ENCODE measurements at regions of chr13 and their contacts with region 1.

Region 1: DNA sequence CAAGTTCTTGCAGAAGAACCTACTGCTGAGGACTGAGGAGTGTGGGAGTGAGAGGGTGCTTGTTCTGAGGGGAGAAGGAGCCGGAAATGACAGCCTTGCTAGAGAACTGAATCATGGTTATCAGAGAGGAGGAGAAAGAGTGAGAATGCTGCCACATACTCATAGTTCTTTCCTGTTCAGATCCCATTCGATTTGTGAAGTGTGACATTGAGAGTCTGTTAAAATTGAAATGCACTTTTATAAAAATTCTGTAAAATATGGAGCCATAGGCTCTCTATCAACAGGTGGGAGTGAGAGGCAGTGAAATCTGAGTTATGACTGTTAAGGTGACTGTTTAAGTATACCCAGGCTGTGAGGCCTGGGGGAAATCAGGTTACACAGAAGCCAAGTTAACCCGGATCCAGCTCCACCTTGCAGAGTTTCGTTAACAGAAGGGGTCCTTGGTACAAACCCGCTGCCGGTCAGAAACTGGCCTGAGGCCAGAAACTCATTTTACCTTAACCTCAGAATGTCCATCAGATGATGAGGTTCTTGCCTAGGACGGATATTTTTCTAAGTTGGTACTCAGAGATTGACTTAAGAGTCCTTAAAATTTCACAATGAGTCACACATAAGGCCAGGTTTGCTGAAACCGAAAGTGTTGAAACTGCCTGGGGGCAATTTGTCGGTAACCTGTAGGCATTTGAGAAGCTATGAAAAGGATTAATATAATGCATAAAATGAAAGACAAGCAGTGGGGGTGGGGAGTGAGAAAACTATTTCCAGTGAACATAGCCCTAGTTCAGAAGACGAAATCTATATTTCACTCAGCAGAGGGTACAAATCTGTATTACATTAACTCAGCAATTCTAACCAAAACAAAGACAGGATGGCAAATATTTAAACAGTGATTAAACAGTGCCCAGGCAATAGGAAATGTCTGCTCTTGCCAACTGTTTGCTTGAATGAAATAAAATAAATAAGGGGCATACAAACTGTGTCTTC is 350.5 kb downstream of the KCNRG start:
- DNase-seq: peak; percentile 76
- H3K4me3 Mint-ChIP-seq: peak overlapping the region; percentile 54
- H3K27ac Mint-ChIP-seq: peak overlapping the region; percentile 59
- H3K4me1 Mint-ChIP-seq: peaks cover 53% of the 10 kb centered on the region
- H3K27me3 Mint-ChIP-seq: peaks cover 15% of the 10 kb centered on the region

Region 2: DNA sequence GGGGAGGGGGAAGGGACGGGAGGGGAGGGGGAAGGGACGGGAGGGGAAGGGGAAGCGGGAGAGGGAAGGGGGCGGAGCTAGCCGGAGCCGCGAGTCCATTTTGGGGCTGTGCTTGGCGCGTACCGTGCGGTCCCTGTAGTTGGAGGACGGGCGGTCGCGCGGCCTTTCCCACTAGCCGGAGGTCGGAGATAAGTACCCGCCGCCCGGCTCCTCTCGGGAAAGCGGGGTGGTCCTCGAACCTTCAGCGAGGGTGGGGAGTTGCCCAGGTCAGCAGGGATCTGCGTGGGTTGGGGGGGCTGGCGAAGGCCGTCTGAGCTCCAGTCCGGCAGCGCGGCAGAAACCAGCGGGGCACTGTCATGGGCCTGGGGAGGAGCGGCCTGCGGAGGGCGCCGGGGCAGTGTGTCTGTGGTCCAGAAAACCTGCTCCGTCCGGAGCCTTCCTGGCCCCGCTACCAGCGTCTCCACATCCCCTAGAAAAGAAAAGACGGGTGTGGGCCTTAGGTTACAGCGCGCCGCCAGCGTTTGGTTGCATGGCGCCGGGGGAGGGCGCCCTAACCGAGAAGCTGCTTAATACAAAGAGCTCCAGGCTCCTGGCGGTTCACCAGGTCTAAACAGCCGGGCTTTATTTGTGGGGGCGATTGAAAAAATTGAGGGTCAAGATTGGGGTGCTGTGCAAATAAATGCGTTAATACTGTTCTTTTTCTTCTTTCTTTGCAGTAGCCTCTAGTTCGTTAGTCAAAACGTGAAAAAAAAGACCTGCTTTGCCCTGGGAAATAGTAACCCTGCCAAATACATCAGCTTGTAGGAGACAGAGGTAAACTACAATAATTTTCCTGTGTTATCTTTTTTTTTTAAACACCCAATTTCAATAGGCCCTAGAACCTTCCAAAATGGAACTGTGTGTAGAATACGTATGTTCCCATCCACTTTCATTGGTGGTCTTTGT is 368.5 kb before region 1 on chr13 and contains the start of gene TRIM13:
- CTCF ChIA-PET with region 1: interaction called, 3 read pairs
- POLR2A ChIA-PET with region 1: no interaction called
- intact Hi-C with region 1: loop called (anchors 1 kb)
- DNase-seq: peak; percentile 88
- H3K4me3 Mint-ChIP-seq: peak within 1 kb of the TSS; percentile 81
- H3K27ac Mint-ChIP-seq: peak within 1 kb of the TSS; percentile 86
- H3K4me1 Mint-ChIP-seq: peaks cover 44% of the 10 kb centered on the region
- H3K27me3 Mint-ChIP-seq: no peaks in the 10 kb centered on the region
- total RNA-seq, gene TRIM13: 9.8 to 11.6 TPM

Region 3: DNA sequence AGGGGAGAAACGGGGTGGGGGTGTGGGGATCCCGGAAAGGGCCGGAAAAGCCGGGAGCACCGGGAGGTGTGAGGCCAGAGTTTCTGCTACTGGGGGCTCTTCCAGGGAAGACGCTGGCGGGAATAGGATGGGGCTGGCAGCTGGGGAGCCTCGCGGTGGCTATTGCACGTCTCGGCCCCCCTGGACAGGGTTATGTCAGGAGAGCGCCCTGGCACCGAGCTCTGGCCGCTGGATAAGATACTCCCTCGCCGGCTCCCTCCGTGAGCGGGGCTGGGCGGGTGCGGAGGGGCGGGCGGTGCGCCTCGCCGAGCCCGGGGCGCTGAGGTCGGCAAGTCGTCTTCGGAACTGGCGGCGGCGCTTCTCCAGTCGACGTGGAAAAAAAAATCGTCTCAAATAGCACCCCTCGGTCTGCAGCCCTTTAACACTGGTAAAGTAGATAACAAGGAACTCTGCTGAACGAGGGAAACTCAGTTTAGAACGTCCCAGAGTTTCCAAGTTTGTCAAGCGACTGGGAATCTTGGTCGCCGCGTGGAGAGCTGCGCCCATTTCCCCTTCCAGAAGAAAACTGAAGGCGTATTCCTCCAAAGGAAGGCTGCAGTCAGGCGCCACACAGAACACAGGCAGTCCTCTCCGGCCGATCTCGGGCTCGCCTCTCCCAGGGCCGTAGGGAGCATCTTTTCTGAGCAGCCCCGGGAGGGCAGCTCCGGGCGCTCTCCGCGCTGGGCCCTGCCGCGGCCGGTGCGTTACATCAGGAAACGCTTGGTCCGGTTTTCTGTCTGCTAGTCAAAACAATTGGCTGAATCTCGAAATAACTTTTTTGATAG is 235.4 kb before region 1 on chr13:
- CTCF ChIA-PET with region 1: no interaction called
- POLR2A ChIA-PET with region 1: interaction called, 13 read pairs
- intact Hi-C with region 1: loop called (anchors 1 kb)
- DNase-seq: peak; percentile 42
- H3K4me3 Mint-ChIP-seq: peak overlapping the region; percentile 66
- H3K27ac Mint-ChIP-seq: peak overlapping the region; percentile 8
- H3K4me1 Mint-ChIP-seq: peaks cover 63% of the 10 kb centered on the region
- H3K27me3 Mint-ChIP-seq: peaks cover 64% of the 10 kb centered on the region

Region 4: DNA sequence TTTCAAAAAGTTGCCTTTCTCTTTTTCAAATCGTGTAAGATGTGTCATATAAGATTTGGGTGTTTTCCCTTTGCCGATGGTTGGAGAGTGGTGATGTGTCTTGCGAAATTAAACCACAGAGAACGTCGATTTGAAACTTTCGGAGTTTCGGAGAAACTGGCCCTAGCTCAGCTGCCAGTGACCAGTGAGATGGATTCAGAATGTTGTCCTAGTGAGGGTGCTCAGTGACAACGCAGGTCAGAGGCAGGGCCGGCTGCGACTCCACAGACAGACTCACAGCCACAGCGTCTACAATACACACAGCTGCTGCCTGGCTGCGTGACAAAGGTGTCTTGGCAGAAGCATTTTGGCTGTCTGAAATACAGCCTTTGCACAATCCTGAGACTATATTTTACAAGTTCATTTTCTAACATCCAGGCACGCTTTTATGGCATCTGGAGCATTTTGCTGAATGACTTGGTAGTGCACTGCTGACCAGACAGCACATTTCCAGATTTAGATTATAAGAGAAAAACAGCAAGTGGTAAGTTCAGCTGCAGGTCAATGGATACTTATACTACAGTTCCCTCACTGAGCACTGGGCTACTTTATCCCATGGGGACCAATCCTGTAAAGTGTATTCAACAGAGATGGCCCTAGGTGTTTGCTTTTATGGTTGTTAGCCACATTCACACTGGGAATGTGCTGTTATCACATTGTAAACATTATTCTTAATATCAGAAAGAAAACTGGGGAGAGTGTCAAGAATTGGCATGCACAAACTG is 142.9 kb before region 1 on chr13:
- CTCF ChIA-PET with region 1: no interaction called
- POLR2A ChIA-PET with region 1: no interaction called
- intact Hi-C with region 1: loop called (anchors 1 kb)
- DNase-seq: peak; percentile 45
- H3K4me3 Mint-ChIP-seq: peak overlapping the region; percentile 57
- H3K27ac Mint-ChIP-seq: no peak overlapping the region
- H3K4me1 Mint-ChIP-seq: peaks cover 61% of the 10 kb centered on the region
- H3K27me3 Mint-ChIP-seq: peaks cover 47% of the 10 kb centered on the region

Region 5: GRCh38 chr13:50244713-50245574 is 120.8 kb before region 1 on chr13:
- CTCF ChIA-PET with region 1: interaction called, 3 read pairs
- POLR2A ChIA-PET with region 1: interaction called, 13 read pairs
- intact Hi-C with region 1: loop called (anchors 1 kb)
- DNase-seq: peak; percentile 85
- H3K4me3 Mint-ChIP-seq: no peak overlapping the region
- H3K27ac Mint-ChIP-seq: no peak overlapping the region
- H3K4me1 Mint-ChIP-seq: peaks cover 41% of the 10 kb centered on the region
- H3K27me3 Mint-ChIP-seq: peaks cover 29% of the 10 kb centered on the region

Region 6: GRCh38 chr13:50512474-50513299 is 147.0 kb after region 1 on chr13:
- CTCF ChIA-PET with region 1: interaction called, 3 read pairs
- POLR2A ChIA-PET with region 1: no interaction called
- intact Hi-C with region 1: loop called (anchors 5 kb)
- DNase-seq: peak; percentile 57
- H3K4me3 Mint-ChIP-seq: no peak overlapping the region
- H3K27ac Mint-ChIP-seq: no peak overlapping the region
- H3K4me1 Mint-ChIP-seq: no peaks in the 10 kb centered on the region
- H3K27me3 Mint-ChIP-seq: no peaks in the 10 kb centered on the region

Measured in activated CD4-positive, alpha-beta memory T cell treated with anti-CD3 and anti-CD28 coated beads for 36 hours (primary cell).